Calu3 (cell line): ENCODE measurements at regions of chr18 and their contacts with region 1.

Region 1: DNA sequence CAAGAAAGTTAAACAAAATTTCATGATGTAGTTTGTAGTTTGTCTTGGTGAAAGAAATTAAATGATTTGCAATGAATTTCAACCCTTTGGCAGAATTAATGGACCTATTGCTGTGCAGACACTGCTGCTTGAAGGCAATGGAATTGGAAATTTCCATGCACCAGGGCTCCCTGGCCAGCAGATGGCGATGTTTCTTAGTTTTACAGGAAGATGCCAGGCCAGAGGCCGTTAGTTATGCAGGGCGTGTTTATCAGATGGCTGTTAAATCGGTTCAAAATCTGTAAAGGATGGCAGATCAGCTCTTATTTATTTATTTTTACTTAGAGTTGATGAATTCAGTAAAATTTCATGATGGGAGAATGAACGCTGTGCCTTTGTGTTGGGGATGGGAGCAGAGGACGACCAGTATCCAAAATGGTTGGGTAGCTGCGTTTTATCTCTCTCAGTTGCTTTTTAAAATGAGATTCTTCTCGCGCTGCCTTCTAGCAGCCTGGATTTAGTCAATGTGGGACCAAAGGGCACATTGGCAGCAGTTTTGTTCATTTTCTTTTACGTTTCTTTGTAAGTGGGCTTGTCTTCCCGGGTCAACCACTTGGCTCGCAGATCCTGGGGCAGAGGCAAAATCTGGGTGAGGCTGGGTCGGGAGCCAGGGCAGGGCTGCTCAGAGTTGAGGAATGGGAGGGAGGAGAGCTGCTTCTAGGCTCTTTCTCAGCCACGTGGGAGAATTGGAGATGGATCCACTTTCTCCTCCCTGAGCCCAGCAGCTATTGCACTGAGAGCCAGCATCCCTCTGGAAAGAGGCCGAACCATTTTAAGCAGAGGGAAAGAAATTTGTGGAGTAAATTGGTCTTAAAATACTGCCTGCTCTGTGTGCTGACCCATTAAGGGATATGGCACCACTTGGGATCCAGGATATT is 344.0 kb downstream of the PIK3C3 start:
- DNase-seq: peak; percentile 76
- H3K4me3 Mint-ChIP-seq: no peak overlapping the region
- H3K27ac Mint-ChIP-seq: no peak overlapping the region
- H3K4me1 Mint-ChIP-seq: no peaks in the 10 kb centered on the region
- H3K27me3 Mint-ChIP-seq: peaks cover 8% of the 10 kb centered on the region
- CTCF ChIP-seq: peak; percentile 86

Region 2: DNA sequence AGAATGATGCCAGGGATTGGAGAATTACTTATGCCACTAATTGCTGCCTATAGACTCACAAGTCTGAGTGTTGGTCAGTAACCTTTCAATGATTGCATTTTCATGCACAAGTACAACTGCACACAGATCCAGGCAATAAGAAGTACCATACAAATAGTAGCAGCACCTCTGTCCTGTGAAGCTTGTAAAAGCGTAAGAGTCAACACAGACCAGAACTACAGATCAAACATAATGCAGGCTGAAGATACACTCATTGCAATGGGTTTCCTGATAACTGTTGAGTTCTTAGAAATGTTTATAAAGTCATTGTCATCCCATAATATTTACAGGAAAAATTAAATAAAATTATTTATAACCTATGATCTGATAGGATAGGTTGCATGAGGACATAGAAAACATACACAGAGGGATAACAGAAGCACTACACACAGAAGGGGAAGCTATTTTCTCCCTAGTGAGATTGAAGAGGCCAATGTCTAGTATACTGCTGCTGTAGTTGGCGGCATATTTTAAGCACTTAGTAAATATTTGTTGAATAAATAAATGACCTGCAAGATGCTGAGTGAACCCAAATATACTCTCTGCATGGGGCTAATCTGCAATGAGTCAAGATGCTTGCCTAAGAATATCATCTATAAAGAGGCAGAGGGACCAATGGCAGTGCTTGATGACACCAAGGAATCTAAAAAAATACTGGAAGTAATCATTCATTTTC is 349.7 kb before region 1 on chr18:
- CTCF ChIA-PET with region 1: no interaction called
- intact Hi-C with region 1: no loop called
- DNase-seq: no peak
- H3K4me3 Mint-ChIP-seq: no peak overlapping the region
- H3K27ac Mint-ChIP-seq: no peak overlapping the region
- H3K4me1 Mint-ChIP-seq: no peaks in the 10 kb centered on the region
- H3K27me3 Mint-ChIP-seq: peaks cover 26% of the 10 kb centered on the region
- CTCF ChIP-seq: no peak

Region 3: GRCh38 chr18:42072407-42072806 is 226.6 kb before region 1 on chr18:
- CTCF ChIA-PET with region 1: no interaction called
- intact Hi-C with region 1: no loop called
- DNase-seq: no peak
- H3K4me3 Mint-ChIP-seq: no peak overlapping the region
- H3K27ac Mint-ChIP-seq: no peak overlapping the region
- H3K4me1 Mint-ChIP-seq: no peaks in the 10 kb centered on the region
- H3K27me3 Mint-ChIP-seq: no peaks in the 10 kb centered on the region
- CTCF ChIP-seq: no peak

Region 4: GRCh38 chr18:42274488-42275137 is 24.4 kb before region 1 on chr18:
- CTCF ChIA-PET with region 1: interaction called, 13 read pairs
- intact Hi-C with region 1: no loop called
- DNase-seq: no peak
- H3K4me3 Mint-ChIP-seq: no peak overlapping the region
- H3K27ac Mint-ChIP-seq: no peak overlapping the region
- H3K4me1 Mint-ChIP-seq: no peaks in the 10 kb centered on the region
- H3K27me3 Mint-ChIP-seq: no peaks in the 10 kb centered on the region
- CTCF ChIP-seq: no peak

Region 5: DNA sequence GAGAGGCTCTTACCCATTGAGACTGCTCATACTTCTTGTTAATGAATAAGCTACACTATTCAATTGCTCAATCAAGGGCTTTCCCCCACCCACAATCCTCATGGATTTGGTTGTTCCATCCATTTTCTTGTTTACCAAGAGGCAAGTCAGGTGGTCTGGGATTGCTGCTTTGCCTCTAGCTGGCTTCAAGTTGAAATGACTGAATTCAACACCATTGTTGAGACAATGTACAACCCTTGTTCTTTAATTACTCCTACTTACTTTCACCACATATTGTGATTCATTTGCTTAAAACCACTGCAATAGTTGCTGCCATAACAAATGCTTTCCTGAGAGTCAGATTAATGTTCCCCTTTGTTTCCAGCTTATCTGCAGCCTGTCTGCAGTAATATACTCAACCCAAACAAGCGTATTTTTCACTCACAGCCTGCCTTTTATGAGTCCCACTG is 284.3 kb after region 1 on chr18:
- CTCF ChIA-PET with region 1: no interaction called
- intact Hi-C with region 1: loop called (anchors 10 kb)
- DNase-seq: no peak
- H3K4me3 Mint-ChIP-seq: no peak overlapping the region
- H3K27ac Mint-ChIP-seq: no peak overlapping the region
- H3K4me1 Mint-ChIP-seq: no peaks in the 10 kb centered on the region
- H3K27me3 Mint-ChIP-seq: no peaks in the 10 kb centered on the region
- CTCF ChIP-seq: no peak

Region 6: GRCh38 chr18:43271593-43272432 is 972.8 kb after region 1 on chr18:
- CTCF ChIA-PET with region 1: interaction called, 5 read pairs
- intact Hi-C with region 1: loop called (anchors 1 kb)
- DNase-seq: peak; percentile 46
- H3K4me3 Mint-ChIP-seq: no peak overlapping the region
- H3K27ac Mint-ChIP-seq: no peak overlapping the region
- H3K4me1 Mint-ChIP-seq: no peaks in the 10 kb centered on the region
- H3K27me3 Mint-ChIP-seq: peaks cover 13% of the 10 kb centered on the region
- CTCF ChIP-seq: peak; percentile 57

Region 7: DNA sequence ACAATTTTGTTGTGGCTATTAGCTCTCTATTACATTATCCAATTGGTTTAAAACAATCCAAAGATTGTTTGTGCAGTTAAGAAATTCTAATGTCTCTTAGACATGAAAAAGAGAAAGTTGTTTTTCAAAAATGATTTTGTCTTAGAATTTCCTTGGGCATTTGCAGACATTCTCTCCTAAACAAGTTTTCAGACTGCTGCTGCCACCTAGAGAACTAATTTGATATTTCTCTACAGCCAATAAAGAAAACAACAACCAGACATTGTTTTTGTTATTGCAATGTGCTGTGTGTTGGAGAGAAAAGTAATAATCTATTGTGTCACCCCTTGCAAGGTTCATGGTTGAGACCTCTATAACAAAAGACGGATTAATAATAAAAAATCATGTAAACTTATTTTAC is 1097.2 kb after region 1 on chr18:
- CTCF ChIA-PET with region 1: no interaction called
- intact Hi-C with region 1: loop called (anchors 1 kb)
- DNase-seq: no peak
- H3K4me3 Mint-ChIP-seq: no peak overlapping the region
- H3K27ac Mint-ChIP-seq: no peak overlapping the region
- H3K4me1 Mint-ChIP-seq: no peaks in the 10 kb centered on the region
- H3K27me3 Mint-ChIP-seq: no peaks in the 10 kb centered on the region
- CTCF ChIP-seq: no peak

Region 8: DNA sequence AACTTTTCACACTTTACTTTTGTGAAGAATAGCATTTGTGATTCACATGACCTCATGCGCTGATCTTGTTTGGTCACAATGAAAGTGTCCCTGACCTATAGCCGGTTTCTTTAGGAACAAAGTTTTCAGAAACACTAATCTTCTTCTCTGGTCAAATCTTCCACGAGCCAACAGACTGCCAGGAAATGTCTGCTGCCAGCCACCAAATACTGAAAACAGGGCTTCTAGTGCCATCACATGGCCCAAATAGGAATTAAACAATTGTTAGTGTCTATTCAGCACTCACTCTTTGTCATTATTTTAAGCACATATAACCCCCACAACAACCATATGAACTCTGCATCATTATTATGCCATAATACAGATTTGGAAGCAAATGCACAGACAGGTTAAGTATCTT is 1264.8 kb after region 1 on chr18:
- CTCF ChIA-PET with region 1: no interaction called
- intact Hi-C with region 1: loop called (anchors 1 kb)
- DNase-seq: peak; percentile 51
- H3K4me3 Mint-ChIP-seq: no peak overlapping the region
- H3K27ac Mint-ChIP-seq: no peak overlapping the region
- H3K4me1 Mint-ChIP-seq: peaks cover 10% of the 10 kb centered on the region
- H3K27me3 Mint-ChIP-seq: peaks cover 19% of the 10 kb centered on the region
- CTCF ChIP-seq: peak; percentile 47

Region 9: GRCh38 chr18:43596105-43596712 is 1297.2 kb after region 1 on chr18:
- CTCF ChIA-PET with region 1: no interaction called
- intact Hi-C with region 1: loop called (anchors 2 kb)
- DNase-seq: no peak
- H3K4me3 Mint-ChIP-seq: no peak overlapping the region
- H3K27ac Mint-ChIP-seq: no peak overlapping the region
- H3K4me1 Mint-ChIP-seq: no peaks in the 10 kb centered on the region
- H3K27me3 Mint-ChIP-seq: no peaks in the 10 kb centered on the region
- CTCF ChIP-seq: no peak